Lower lobe of right lung (tissue), 2 donors: ENCODE measurements at regions of chr18 and their contacts with region 1.

Region 1: DNA sequence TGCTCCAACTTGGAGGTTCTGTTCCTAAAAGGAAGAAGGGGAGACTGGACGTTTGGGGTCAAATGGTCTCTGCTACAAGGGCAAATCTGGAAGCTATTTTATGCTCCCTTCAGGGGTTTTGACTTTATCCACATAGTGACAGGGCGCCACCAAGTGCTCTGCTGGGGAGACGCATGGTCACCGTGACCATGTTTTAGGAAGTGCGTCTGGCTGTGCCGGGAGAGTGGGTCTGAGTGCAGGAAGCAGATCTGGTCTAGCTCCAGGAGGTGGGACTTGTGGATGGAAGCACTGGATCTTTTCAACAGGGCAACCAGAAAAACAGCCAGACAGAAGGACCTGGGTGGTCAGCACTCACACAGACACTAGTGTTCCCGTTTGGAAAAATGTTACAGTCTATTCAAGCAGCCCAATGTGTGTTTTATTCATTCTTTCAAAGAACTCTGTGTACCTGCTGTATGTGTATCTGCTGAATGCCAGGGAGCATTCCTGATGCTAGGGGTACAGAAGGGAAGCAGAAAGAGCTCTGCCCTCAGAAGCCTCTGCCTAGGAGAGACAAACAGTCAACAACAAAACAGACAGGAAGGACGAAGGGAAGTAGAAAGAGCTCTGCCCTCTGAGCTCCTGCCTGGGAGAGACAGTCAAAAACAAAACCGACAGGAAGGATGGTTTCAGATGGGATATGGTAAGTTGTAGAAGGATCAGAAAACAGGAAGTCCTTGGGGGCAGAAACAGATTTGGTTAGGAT is 14.3 kb downstream of the IMPA2 start:
- DNase-seq: peak; percentile 87
- ATAC-seq: peak; percentile 92 to 95
- H3K4me3 ChIP-seq: no peak overlapping the region
- H3K27ac ChIP-seq: peak overlapping the region; percentile 59
- H3K4me1 ChIP-seq: peaks cover 32% of the 10 kb centered on the region
- H3K27me3 ChIP-seq: no peaks in the 10 kb centered on the region
- CTCF ChIP-seq: peak; percentile 87

Region 2: DNA sequence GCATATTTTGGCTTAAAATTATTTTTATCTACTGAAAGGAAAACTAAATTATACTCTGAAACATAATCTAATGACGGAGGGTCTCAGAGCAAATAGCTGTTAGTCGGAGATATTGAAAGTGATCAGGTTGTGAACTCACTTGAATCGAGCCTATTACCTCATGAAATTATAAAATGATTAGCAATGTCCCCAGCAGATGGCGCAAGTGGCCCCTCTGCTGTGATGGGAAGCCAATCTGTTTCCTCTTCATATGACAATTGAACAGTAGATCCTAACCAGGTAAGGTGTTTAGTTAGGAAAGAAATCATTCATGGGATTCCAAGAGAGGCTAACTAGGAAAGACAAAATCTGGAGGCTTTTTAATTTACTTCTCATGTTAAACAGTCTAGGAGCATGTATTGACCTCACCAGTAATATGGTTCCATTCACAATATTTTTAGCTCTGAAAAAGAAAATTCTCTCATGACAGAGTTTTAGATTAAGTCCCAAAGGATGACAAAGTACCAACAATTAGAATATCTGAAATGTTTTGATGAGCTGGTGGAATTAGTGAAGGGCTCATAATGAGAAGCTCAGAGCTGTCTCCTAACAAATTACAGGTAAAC is 57.6 kb before region 1 on chr18:
- intact Hi-C with region 1: loop called (anchors 5 kb)
- DNase-seq: peak; percentile 77
- ATAC-seq: peak; percentile 80 to 89
- H3K4me3 ChIP-seq: no peak overlapping the region
- H3K27ac ChIP-seq: no peak overlapping the region
- H3K4me1 ChIP-seq: peaks cover 5% of the 10 kb centered on the region
- H3K27me3 ChIP-seq: no peaks in the 10 kb centered on the region
- CTCF ChIP-seq: peak; percentile 79